ENCODE measurements at regions of chr2 and their contacts with region 1.

Region 1: GRCh38 chr2:15939854-15940660 is at the start of gene MYCN:
- DNase-seq: peak in 6 of 14 experiments; percentile 7 to 66 (median 18)
- ATAC-seq: peak; percentile 45
- H3K4me3 ChIP-seq: peak within 1 kb of the TSS; percentile 43
- H3K4me3 Mint-ChIP-seq: peak within 1 kb of the TSS; percentile 87
- H3K27ac ChIP-seq: no peak within 1 kb of the TSS
- H3K27ac Mint-ChIP-seq: no peak within 1 kb of the TSS
- H3K4me1 ChIP-seq: peaks cover 41% of the 10 kb centered on the region
- H3K4me1 Mint-ChIP-seq: peaks cover 36% of the 10 kb centered on the region
- H3K27me3 ChIP-seq: peaks cover 39 to 52% of the 10 kb centered on the region in 2 experiments
- H3K27me3 Mint-ChIP-seq: peaks cover 62% of the 10 kb centered on the region
- CTCF ChIP-seq: peak; percentile 69
- total RNA-seq, gene MYCN: 0.19 TPM in 1 of 2 experiments, not detected in the other

Region 2: GRCh38 chr2:15965564-15966019 is 25.5 kb after region 1 on chr2:
- CTCF ChIA-PET with region 1: no interaction called
- POLR2A ChIA-PET with region 1: interaction called, 18 read pairs
- intact Hi-C with region 1: no loop called
- DNase-seq: peak in 10 of 14 experiments; percentile 2 to 58 (median 27)
- ATAC-seq: peak; percentile 66
- H3K4me3 ChIP-seq: peak overlapping the region; percentile 16
- H3K4me3 Mint-ChIP-seq: peak overlapping the region; percentile 53
- H3K27ac ChIP-seq: peak overlapping the region; percentile 7 to 41
- H3K27ac Mint-ChIP-seq: peak overlapping the region; percentile 78
- H3K4me1 ChIP-seq: peaks cover 26% of the 10 kb centered on the region
- H3K4me1 Mint-ChIP-seq: peaks cover 58% of the 10 kb centered on the region
- H3K27me3 ChIP-seq: no peaks in the 10 kb centered on the region
- H3K27me3 Mint-ChIP-seq: no peaks in the 10 kb centered on the region
- CTCF ChIP-seq: no peak

Region 3: GRCh38 chr2:16218625-16219024 is 278.6 kb after region 1 on chr2:
- CTCF ChIA-PET with region 1: no interaction called
- POLR2A ChIA-PET with region 1: no interaction called
- intact Hi-C with region 1: loop called in 1 of 2 experiments (anchors 10 kb)
- DNase-seq: peak in 1 of 14 experiments; percentile 1
- ATAC-seq: no peak
- H3K4me3 ChIP-seq: no peak overlapping the region
- H3K4me3 Mint-ChIP-seq: no peak overlapping the region
- H3K27ac ChIP-seq: no peak overlapping the region
- H3K27ac Mint-ChIP-seq: no peak overlapping the region
- H3K4me1 ChIP-seq: no peaks in the 10 kb centered on the region
- H3K4me1 Mint-ChIP-seq: no peaks in the 10 kb centered on the region
- H3K27me3 ChIP-seq: no peaks in the 10 kb centered on the region
- H3K27me3 Mint-ChIP-seq: no peaks in the 10 kb centered on the region
- CTCF ChIP-seq: no peak

Region 4: GRCh38 chr2:16608661-16609643 is 668.9 kb after region 1 on chr2:
- CTCF ChIA-PET with region 1: interaction called, 3 read pairs
- POLR2A ChIA-PET with region 1: no interaction called
- intact Hi-C with region 1: loop called in 1 of 2 experiments (anchors 2 kb)
- DNase-seq: peak; percentile 73 to 88 (median 82)
- ATAC-seq: peak; percentile 91
- H3K4me3 ChIP-seq: peak overlapping the region; percentile 67
- H3K4me3 Mint-ChIP-seq: peak overlapping the region; percentile 95
- H3K27ac ChIP-seq: no peak overlapping the region
- H3K27ac Mint-ChIP-seq: peak overlapping the region; percentile 82
- H3K4me1 ChIP-seq: no peaks in the 10 kb centered on the region
- H3K4me1 Mint-ChIP-seq: peaks cover 8% of the 10 kb centered on the region
- H3K27me3 ChIP-seq: no peaks in the 10 kb centered on the region
- H3K27me3 Mint-ChIP-seq: peaks cover 5% of the 10 kb centered on the region
- CTCF ChIP-seq: peak; percentile 89

Region 5: GRCh38 chr2:17518212-17519154 is 1578.4 kb after region 1 on chr2 and contains the start of gene RAD51AP2:
- CTCF ChIA-PET with region 1: no interaction called
- POLR2A ChIA-PET with region 1: no interaction called
- intact Hi-C with region 1: no loop called
- DNase-seq: no peak
- ATAC-seq: no peak
- H3K4me3 ChIP-seq: no peak within 1 kb of the TSS
- H3K4me3 Mint-ChIP-seq: no peak within 1 kb of the TSS
- H3K27ac ChIP-seq: no peak within 1 kb of the TSS
- H3K27ac Mint-ChIP-seq: no peak within 1 kb of the TSS
- H3K4me1 ChIP-seq: no peaks in the 10 kb centered on the region
- H3K4me1 Mint-ChIP-seq: no peaks in the 10 kb centered on the region
- H3K27me3 ChIP-seq: peaks cover 7 to 19% of the 10 kb centered on the region in 2 experiments
- H3K27me3 Mint-ChIP-seq: peaks cover 37% of the 10 kb centered on the region
- CTCF ChIP-seq: no peak
- total RNA-seq, gene RAD51AP2: not detected

Measured in CD4-positive, alpha-beta T cell (primary cell).